Activated naive CD8-positive, alpha-beta T cell treated with anti-CD3 and anti-CD28 coated beads, Interleukin-2, amount 10 ng/mL, durations not matched to agents 7 days and 5 days (primary cell): ENCODE measurements at regions of chr1 and their contacts with region 1.

Region 1: DNA sequence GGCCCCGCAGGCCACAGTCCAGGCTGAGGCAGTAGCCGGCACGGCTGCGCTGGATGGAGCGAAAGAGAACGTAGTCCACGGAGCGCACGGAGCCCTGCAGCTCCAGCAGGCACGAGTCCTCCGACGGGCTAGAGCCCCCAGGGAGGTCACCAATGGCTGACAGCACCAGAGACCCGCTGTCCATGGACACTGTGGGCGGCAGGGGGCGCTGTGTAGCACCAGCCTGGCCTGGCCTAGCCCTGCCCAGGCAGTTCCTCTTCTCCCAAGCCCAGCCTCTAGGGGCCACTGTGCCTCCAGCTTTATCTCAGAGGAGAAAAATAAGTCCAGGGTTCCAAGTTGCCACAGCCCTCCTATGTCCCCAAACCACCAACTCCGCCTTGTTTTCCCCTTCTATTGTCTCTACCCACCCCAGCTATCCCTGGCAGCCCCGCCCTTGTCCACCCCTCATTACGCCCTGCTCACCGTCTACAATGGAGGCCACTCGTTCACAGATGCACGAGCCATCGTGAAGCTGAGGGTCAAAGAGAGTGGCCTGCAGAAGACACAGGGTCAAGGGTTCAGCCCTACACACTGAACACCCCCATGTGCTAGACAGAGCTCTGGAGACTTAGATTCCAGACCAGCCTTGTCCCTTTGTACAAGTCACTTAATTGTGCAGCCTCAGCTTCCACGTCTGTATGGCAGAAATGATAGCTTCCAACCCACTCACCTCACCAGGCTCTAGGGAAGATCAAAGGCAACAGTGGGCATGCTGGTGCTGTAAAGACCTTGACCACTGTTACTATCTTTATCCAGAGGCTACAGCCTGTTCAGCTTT is 4.4 kb downstream of the ENTREP3 start:
- DNase-seq: peak; percentile 99
- ATAC-seq: peak; percentile 97
- H3K4me3 Mint-ChIP-seq: peak overlapping the region; percentile 69
- H3K27ac Mint-ChIP-seq: peak overlapping the region; percentile 51
- H3K4me1 Mint-ChIP-seq: peaks cover 20% of the 10 kb centered on the region
- H3K27me3 Mint-ChIP-seq: no peaks in the 10 kb centered on the region

Region 2: GRCh38 chr1:155227261-155228095 is 23.4 kb before region 1 on chr1:
- POLR2A ChIA-PET with region 1: interaction called, 12 read pairs
- DNase-seq: peak; percentile 96
- ATAC-seq: peak; percentile 96
- H3K4me3 Mint-ChIP-seq: peak overlapping the region; percentile 95
- H3K27ac Mint-ChIP-seq: peak overlapping the region; percentile 92
- H3K4me1 Mint-ChIP-seq: peaks cover 24% of the 10 kb centered on the region
- H3K27me3 Mint-ChIP-seq: no peaks in the 10 kb centered on the region

Region 3: DNA sequence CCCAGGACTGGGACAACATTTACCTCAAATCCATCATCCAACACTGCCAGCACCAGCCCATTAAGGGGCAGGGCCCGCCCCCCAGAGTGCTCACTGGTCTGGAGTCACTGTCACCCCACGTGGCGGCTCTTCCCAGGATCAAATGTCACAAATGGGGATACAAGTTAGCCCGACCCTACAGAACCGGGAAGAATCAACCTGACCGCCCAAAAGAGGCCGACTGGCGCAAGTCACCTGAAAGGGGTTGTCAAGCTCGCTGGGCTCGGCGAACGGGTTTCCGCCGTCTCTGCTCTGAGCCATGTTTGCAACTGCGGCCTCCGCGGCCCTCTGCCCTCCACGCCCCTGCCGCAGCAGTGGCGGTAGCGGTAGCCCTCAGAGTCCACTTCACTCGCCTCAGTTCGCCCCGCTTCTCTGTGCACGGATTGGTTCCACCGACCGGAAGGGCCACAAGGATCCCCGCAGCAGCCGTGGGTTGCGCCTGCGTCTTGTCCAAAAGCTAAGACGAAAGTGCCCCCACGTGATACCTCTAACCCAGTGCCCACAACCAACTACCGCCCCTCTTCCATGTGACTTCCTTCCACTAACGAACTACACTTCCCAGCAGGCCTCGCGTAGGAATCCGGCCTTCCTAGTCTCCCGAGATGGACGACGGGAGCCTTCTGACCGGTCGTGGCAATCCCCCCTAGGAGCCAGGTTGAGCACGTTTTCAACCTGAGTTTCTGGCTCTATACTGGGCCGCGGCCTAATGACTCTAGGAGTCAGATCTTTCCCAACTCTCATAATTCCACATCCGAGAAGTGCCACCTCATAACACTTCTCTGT is 11.2 kb after region 1 on chr1 and contains the start of gene SCAMP3:
- POLR2A ChIA-PET with region 1: interaction called, 35 read pairs
- DNase-seq: peak; percentile 81
- ATAC-seq: peak; percentile 96
- H3K4me3 Mint-ChIP-seq: peak within 1 kb of the TSS; percentile 97
- H3K27ac Mint-ChIP-seq: peak within 1 kb of the TSS; percentile 93
- H3K4me1 Mint-ChIP-seq: peaks cover 35% of the 10 kb centered on the region
- H3K27me3 Mint-ChIP-seq: no peaks in the 10 kb centered on the region
- total RNA-seq, gene SCAMP3: 81.7 to 84.2 TPM

Region 4: GRCh38 chr1:155323798-155324610 is 73.2 kb after region 1 on chr1:
- POLR2A ChIA-PET with region 1: interaction called, 36 read pairs
- DNase-seq: peak; percentile 90
- ATAC-seq: peak; percentile 82
- H3K4me3 Mint-ChIP-seq: peak overlapping the region; percentile 90
- H3K27ac Mint-ChIP-seq: peak overlapping the region; percentile 81
- H3K4me1 Mint-ChIP-seq: peaks cover 39% of the 10 kb centered on the region
- H3K27me3 Mint-ChIP-seq: no peaks in the 10 kb centered on the region